ENCODE measurements at regions of chr1 and their contacts with region 1.

Region 1: DNA sequence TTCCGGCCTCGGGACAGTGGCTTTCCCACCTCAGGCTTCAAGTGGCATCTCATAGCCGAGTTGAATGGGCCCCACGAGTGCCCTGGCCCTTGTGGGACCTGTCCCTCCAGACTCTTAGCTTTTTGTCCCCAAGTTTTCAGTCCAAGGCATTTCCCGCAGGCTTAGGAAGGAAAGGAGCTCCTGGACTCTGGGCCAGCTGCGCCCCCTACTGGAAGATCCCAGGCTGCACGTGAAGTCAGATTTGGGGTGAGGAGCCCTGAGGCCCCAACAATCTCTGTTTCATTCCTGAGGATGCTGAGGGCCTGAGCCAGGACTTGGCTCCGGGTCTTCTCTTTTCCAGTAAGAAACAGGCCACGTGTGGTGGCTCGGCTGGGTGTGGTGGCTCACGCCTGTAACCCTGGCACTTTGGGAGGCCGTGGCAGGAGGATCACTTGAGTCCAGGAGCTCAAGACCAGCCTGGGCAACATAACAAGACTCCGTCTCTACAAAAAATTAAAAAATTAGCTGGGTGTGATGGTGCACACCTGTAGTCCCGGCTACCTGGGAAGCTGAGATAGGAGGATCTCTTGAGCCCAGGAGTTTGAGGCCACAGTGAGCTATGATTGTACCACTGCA is 67.4 kb downstream of the ARHGEF10L start:
- DNase-seq: peak; percentile 76
- H3K4me3 Mint-ChIP-seq: no peak overlapping the region
- H3K27ac Mint-ChIP-seq: no peak overlapping the region
- H3K4me1 Mint-ChIP-seq: no peaks in the 10 kb centered on the region
- H3K27me3 Mint-ChIP-seq: no peaks in the 10 kb centered on the region

Region 2: DNA sequence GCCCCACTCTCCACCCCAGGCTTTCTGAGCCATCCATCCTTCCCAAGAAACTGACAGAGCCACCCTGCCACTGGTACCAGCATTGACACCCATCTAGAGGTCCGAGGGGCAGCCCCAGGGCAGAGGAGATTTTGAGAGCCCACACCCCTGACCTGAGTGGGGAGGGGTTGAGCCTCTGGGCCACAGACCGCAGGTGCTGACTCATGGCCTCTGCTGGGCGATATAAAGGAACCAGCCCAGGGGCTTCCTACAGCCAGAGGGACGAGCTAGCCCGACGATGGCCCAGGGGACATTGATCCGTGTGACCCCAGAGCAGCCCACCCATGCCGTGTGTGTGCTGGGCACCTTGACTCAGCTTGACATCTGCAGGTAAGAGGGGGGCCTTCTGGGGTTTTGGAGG is 299.0 kb before region 1 on chr1 and contains the start of gene PADI4:
- CTCF ChIA-PET with region 1: no interaction called
- intact Hi-C with region 1: no loop called
- DNase-seq: no peak
- H3K4me3 Mint-ChIP-seq: no peak within 1 kb of the TSS
- H3K27ac Mint-ChIP-seq: no peak within 1 kb of the TSS
- H3K4me1 Mint-ChIP-seq: peaks cover 10% of the 10 kb centered on the region
- H3K27me3 Mint-ChIP-seq: peaks cover 5% of the 10 kb centered on the region
- total RNA-seq, gene PADI4: 1.5 to 1.8 TPM

Region 3: GRCh38 chr1:17494114-17494729 is 112.7 kb before region 1 on chr1:
- CTCF ChIA-PET with region 1: interaction called, 22 read pairs
- intact Hi-C with region 1: loop called (anchors 2 kb)
- DNase-seq: peak; percentile 78
- H3K4me3 Mint-ChIP-seq: no peak overlapping the region
- H3K27ac Mint-ChIP-seq: no peak overlapping the region
- H3K4me1 Mint-ChIP-seq: no peaks in the 10 kb centered on the region
- H3K27me3 Mint-ChIP-seq: peaks cover 4% of the 10 kb centered on the region

Region 4: GRCh38 chr1:17502326-17502778 is 104.6 kb before region 1 on chr1:
- CTCF ChIA-PET with region 1: interaction called, 38 read pairs
- intact Hi-C with region 1: loop called (anchors 1 kb)
- DNase-seq: peak; percentile 75
- H3K4me3 Mint-ChIP-seq: no peak overlapping the region
- H3K27ac Mint-ChIP-seq: no peak overlapping the region
- H3K4me1 Mint-ChIP-seq: no peaks in the 10 kb centered on the region
- H3K27me3 Mint-ChIP-seq: peaks cover 12% of the 10 kb centered on the region

Region 5: DNA sequence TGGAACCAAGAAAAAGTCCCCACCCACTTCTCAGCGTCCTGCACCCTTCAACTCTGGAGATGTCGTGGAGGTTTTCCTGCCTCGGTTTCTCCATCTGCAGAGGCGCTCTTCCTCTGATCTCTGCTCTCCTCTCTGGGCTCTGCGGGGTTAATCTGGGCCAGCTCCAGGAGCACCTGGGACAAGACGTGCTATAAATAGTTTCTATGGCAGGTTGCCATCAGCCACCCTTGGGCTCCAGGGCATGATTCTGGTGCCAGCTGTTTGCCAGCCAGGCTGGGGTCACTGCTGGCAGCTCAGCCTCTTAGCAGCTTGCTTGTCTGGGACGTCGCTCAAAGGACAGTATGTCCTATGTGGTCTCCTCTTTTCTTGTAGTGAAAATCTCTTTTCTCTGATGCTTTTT is 285.3 kb after region 1 on chr1:
- CTCF ChIA-PET with region 1: no interaction called
- intact Hi-C with region 1: no loop called
- DNase-seq: no peak
- H3K4me3 Mint-ChIP-seq: no peak overlapping the region
- H3K27ac Mint-ChIP-seq: no peak overlapping the region
- H3K4me1 Mint-ChIP-seq: no peaks in the 10 kb centered on the region
- H3K27me3 Mint-ChIP-seq: peaks cover 11% of the 10 kb centered on the region

Region 6: DNA sequence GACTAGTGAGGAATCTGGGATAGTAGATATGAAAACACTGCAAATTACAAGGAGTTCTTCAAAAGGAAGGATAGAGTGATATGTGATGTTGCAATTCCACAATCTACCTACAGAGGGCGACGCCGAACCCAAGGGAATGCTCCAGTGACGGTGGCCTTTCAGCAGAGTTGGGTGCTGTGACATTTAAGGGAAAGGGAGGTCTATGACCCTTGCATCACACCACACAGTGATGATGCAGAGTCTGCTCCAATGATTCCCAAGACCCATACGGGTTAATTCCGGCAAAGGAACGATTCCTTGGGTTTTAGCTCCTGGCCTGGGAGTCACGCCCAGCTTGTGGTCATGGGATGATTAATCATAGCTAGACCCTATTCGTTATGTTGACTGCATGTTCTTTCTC is 377.6 kb after region 1 on chr1:
- CTCF ChIA-PET with region 1: no interaction called
- intact Hi-C with region 1: no loop called
- DNase-seq: peak; percentile 45
- H3K4me3 Mint-ChIP-seq: no peak overlapping the region
- H3K27ac Mint-ChIP-seq: no peak overlapping the region
- H3K4me1 Mint-ChIP-seq: no peaks in the 10 kb centered on the region
- H3K27me3 Mint-ChIP-seq: peaks cover 15% of the 10 kb centered on the region

Measured in activated naive CD4-positive, alpha-beta T cell treated with anti-CD3 and anti-CD28 coated beads for 36 hours (primary cell).